Activated CD4-positive, alpha-beta T cell treated with anti-CD3 and anti-CD28 coated beads, Interleukin-2, amount 10 ng/mL, durations not matched to agents 24 days and 14 days (primary cell): ENCODE measurements at regions of chr5 and their contacts with region 1.

Region 1: GRCh38 chr5:96614110-96614691 is 48.0 kb upstream of the CAST start:
- DNase-seq: peak; percentile 85
- H3K4me3 Mint-ChIP-seq: no peak overlapping the region
- H3K27ac Mint-ChIP-seq: no peak overlapping the region
- H3K4me1 Mint-ChIP-seq: peaks cover 6% of the 10 kb centered on the region
- H3K27me3 Mint-ChIP-seq: peaks cover 47% of the 10 kb centered on the region

Region 2: GRCh38 chr5:96256778-96257470 is 357.3 kb before region 1 on chr5:
- intact Hi-C with region 1: no loop called
- DNase-seq: no peak
- H3K4me3 Mint-ChIP-seq: no peak overlapping the region
- H3K27ac Mint-ChIP-seq: no peak overlapping the region
- H3K4me1 Mint-ChIP-seq: peaks cover 3% of the 10 kb centered on the region
- H3K27me3 Mint-ChIP-seq: peaks cover 7% of the 10 kb centered on the region

Region 3: GRCh38 chr5:96651948-96652753 is 38.0 kb after region 1 on chr5:
- intact Hi-C with region 1: loop called (anchors 5 kb)
- DNase-seq: peak; percentile 65
- H3K4me3 Mint-ChIP-seq: no peak overlapping the region
- H3K27ac Mint-ChIP-seq: no peak overlapping the region
- H3K4me1 Mint-ChIP-seq: peaks cover 31% of the 10 kb centered on the region
- H3K27me3 Mint-ChIP-seq: peaks cover 60% of the 10 kb centered on the region

Region 4: GRCh38 chr5:96687812-96688453 is 73.7 kb after region 1 on chr5:
- intact Hi-C with region 1: loop called (anchors 1 kb)
- DNase-seq: no peak
- H3K4me3 Mint-ChIP-seq: no peak overlapping the region
- H3K27ac Mint-ChIP-seq: no peak overlapping the region
- H3K4me1 Mint-ChIP-seq: peaks cover 14% of the 10 kb centered on the region
- H3K27me3 Mint-ChIP-seq: no peaks in the 10 kb centered on the region

Region 5: DNA sequence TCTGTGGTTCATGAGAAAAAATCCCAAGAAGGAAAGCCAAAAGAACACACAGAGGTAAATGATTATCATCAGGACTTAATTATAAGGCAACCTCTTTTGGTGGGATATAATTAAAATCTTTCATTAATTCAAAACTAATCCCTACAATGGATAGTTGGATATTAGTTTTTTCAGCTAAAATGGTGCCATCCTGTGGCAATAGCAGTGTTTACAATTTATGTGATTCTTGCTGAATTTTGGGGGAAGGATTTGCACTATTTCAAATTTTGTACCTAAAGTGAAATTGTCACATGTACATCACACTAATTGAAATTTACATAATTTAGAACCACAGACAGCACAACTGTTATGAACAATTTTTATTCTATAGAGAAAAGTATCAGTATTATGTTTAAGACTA is 115.0 kb after region 1 on chr5:
- intact Hi-C with region 1: loop called (anchors 2 kb)
- DNase-seq: peak; percentile 9
- H3K4me3 Mint-ChIP-seq: no peak overlapping the region
- H3K27ac Mint-ChIP-seq: no peak overlapping the region
- H3K4me1 Mint-ChIP-seq: peaks cover 4% of the 10 kb centered on the region
- H3K27me3 Mint-ChIP-seq: no peaks in the 10 kb centered on the region

Region 6: DNA sequence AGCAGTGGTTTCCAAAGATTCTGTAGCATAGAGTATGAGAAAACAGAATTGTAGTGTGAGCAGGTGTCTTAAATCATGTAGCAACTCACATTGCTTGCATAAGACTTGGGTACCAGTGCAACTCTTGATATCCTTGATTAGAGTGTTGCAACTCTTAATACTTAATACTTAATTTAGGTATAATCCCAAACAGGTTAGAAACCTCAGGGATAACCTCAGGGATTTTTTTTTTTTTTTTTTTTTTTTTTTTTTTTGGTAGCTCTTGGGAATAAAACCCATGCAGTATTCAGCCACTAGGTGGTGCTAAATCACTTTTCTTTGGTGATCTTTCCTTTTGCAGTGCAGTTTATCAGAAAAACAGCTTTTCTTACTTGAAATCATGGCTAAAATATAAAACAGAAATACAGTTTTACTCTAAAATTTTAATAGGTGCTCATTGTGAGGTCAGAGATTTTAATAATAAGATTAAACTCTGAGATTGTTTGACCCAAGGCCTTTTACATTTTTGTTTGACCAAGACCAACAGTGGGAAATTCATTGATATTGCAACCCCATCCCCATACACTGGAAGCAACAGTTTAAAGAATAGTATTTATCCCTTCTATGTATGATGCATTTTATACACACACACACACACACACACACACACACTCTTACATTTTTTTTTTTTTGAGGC is 138.3 kb after region 1 on chr5:
- intact Hi-C with region 1: loop called (anchors 1 kb)
- DNase-seq: peak; percentile 86
- H3K4me3 Mint-ChIP-seq: no peak overlapping the region
- H3K27ac Mint-ChIP-seq: no peak overlapping the region
- H3K4me1 Mint-ChIP-seq: no peaks in the 10 kb centered on the region
- H3K27me3 Mint-ChIP-seq: no peaks in the 10 kb centered on the region

Region 7: DNA sequence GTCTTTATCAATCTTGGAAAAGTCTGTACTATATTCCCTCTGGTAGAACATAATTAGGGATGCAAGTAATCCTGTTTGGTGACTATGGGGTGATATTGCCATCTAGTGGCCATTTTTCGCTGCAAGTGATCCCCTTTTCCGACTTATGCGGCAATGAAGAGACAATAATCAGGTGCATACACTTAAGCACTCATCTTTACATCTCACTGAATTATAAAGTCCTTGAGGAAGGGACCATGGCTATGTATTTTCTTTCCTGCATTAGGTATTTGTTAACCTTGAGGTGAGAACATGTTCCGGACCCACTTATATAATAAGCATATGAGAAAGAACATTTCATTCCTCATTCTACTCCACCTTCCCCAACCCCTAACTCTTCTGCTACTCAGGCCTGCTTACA is 547.8 kb after region 1 on chr5:
- intact Hi-C with region 1: loop called (anchors 5 kb)
- DNase-seq: peak; percentile 87
- H3K4me3 Mint-ChIP-seq: no peak overlapping the region
- H3K27ac Mint-ChIP-seq: no peak overlapping the region
- H3K4me1 Mint-ChIP-seq: peaks cover 5% of the 10 kb centered on the region
- H3K27me3 Mint-ChIP-seq: no peaks in the 10 kb centered on the region